HEK293 (cell line): ENCODE measurements at regions of chr1 and their contacts with region 1.

Region 1: GRCh38 chr1:40338745-40339424 is 21.8 kb upstream of the COL9A2 start:
- H3K4me3 ChIP-seq: no peak overlapping the region
- H3K27ac ChIP-seq: no peak overlapping the region
- H3K4me1 ChIP-seq: no peaks in the 10 kb centered on the region
- CTCF ChIP-seq: peak; percentile 91

Region 2: DNA sequence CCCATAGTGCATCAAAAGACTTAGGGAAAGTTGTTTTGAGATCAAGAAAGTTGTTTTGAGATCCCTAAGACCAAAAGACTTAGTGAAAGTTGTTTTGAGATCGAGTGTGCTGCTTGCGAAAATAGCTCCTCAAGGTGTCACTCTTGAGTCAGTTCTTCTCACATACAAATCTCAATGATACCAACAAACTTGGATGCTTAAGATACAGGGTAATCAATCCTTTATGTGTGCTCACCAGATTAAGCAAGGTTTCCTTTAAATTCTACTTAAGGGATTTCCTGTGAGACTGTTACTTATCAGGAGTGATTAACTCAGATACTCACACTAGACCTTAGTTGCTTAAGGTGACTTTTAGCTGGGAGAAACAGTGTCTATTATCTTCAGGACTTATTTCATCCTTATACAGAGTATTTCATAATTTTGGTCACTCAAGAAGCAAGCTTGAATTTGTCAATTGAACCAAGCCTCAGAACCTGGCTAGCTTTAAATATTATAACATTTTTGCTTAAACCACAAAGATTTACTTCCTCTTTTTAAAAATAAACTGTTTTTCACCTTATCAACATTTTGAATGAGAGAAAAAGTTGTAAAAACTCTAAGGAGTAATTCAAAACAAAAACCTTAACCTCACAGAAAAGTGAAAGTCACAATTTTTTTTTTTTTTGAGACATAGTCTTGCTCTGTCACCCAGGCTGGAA is 185.7 kb before region 1 on chr1:
- CTCF ChIA-PET with region 1: interaction called, 132 read pairs
- POLR2A ChIA-PET with region 1: interaction called, 4 read pairs
- H3K4me3 ChIP-seq: no peak overlapping the region
- H3K27ac ChIP-seq: no peak overlapping the region
- H3K4me1 ChIP-seq: no peaks in the 10 kb centered on the region
- CTCF ChIP-seq: peak; percentile 22; the same call in 1 of the 2 replicates

Region 3: GRCh38 chr1:40315239-40315794 is 23.6 kb before region 1 on chr1:
- CTCF ChIA-PET with region 1: interaction called, 26 read pairs
- POLR2A ChIA-PET with region 1: no interaction called
- H3K4me3 ChIP-seq: no peak overlapping the region
- H3K27ac ChIP-seq: no peak overlapping the region
- H3K4me1 ChIP-seq: no peaks in the 10 kb centered on the region; the same call in 1 of the 2 replicates
- CTCF ChIP-seq: peak; percentile 58; the same call in 1 of the 2 replicates

Region 4: DNA sequence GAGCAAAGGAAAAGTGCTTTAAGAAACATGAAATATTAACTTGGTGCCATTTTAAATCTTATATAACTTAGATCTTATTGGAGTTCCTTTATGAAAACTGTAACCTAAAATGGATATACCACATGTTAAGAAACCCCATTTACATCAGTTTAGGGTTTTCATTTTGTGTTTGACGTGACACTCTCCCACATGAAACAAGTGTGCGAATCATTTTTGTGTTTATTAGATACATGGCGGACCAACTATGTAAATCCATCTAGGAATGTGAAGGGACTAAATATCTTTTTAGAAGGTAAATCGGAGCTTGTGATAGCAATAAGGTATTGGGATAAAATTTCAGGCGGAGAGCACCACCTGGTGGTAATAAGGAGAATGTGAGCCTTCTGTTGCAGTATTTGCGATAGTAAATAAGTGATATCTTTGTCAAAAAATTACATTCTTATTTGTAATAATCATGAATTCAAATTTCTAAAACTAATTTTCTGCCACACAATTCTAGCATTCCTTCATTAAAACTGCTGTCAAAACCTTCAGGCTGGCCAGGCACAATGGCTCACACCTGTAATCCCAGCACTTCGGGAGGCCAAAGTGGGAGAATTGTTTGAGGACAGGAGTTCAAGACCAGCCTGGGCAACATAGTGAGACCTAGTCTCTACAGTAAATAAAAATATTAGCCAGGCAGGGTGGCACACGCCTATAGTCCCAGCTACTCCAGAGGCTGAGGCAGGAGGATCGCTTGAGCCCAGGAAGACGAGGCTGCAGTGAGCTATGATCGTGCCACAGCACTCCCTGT is 66.0 kb after region 1 on chr1:
- CTCF ChIA-PET with region 1: interaction called, 24 read pairs
- POLR2A ChIA-PET with region 1: no interaction called
- H3K4me3 ChIP-seq: no peak overlapping the region
- H3K27ac ChIP-seq: no peak overlapping the region
- H3K4me1 ChIP-seq: peaks cover 6% of the 10 kb centered on the region; the same call in 1 of the 2 replicates
- CTCF ChIP-seq: peak; percentile 63; the same call in 1 of the 2 replicates